HEK293T (cell line): ENCODE measurements at regions of chr11 and their contacts with region 1.

Region 1: DNA sequence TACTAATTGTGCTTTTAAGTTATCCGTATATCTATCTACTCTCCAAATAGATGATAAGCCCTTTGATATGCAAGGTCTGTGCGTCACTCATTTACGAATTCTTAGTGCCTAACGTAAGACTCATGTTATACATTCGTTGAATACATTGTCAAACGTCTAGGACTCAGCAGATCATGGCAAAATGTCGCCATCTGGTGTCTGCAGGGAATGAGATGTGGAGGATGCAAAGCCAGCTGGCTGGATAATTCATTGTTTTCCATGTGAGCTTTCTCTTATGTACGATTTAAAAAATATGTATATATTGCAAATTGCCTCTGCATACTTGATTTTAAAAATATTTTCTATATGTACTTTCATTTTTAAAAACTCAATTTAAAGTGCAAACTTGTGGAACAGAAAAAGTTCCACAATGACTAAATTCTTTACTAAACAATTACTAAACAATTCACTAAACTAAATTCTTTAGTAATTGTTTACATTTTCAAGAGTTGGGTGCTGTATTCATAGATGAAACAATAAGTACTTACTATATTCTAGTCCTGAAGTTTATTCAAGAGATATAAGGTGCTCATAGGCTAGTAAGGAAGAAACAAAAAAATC is 33.8 kb downstream of the ZNF202 start:
- DNase-seq: peak; percentile 65

Region 2: GRCh38 chr11:123654566-123655081 is 53.1 kb before region 1 on chr11 and contains the start of gene SCN3B:
- CTCF ChIA-PET with region 1: interaction called, 25 read pairs
- POLR2A ChIA-PET with region 1: no interaction called
- DNase-seq: peak; percentile 90

Region 3: DNA sequence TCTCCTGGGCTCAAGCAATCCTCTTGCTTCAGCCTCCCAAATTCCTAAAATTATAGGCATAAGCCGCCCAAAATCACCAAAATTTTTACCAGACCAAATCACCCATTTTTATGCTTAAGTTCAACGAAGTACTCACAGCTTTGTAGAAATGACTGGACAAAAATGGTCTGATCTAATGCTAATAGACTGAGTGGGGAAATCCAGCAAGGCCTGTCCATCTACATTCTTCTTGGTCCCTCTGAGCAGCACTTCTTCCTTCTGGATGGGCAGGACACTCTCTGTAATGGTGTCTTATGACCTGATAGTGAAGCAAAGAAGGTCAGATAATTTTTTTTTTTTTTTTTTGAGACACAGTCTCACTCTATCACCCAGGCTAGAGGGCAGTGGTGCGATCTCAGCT is 65.3 kb after region 1 on chr11:
- CTCF ChIA-PET with region 1: no interaction called
- POLR2A ChIA-PET with region 1: no interaction called
- DNase-seq: no peak

Region 4: GRCh38 chr11:124143034-124143433 is 435.3 kb after region 1 on chr11:
- CTCF ChIA-PET with region 1: no interaction called
- POLR2A ChIA-PET with region 1: no interaction called
- DNase-seq: no peak